ENCODE measurements at regions of chr9 and their contacts with region 1.

Region 1: DNA sequence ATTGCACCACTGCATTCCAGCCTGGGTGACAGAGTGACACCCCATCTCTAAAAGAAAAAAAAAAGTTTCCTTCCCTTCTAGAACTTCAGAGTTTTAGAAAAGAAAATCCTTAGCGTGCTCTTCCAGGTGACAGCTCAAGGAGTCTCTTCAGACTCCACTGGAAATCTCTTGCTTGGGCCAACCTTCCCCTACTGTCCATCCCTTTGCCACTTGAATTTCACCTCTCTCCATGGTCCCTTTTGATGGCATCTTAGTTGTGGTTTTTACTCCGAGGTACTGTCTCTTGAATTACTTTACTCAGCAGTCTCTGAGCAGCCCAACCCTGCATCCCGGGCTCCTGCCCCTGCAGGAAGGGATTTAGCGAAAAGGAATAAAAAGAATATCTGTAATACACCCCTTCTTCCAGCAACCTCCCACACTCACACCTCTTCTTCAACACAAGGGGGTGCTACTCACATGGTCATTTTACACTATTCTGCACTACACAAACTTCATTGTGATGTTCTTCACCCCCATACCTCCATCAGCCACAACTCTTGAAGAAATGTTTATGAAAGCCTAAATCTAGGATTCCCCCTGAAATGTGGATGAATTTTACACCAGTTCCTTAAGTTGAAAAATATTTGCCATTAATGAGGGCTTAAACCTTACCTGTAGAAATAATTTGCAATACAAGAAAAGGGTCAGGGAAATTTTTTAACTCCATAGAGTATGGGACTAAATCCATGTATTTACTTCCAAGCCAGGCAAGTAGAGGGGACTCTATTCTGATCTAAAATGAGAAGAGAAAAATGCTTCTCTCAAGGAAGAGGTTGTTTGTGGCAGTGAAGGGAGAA is 25.9 kb downstream of the TPD52L3 start:
- DNase-seq: peak; percentile 9
- H3K4me3 ChIP-seq: no peak overlapping the region
- H3K27me3 ChIP-seq: peaks cover 3% of the 10 kb centered on the region
- CTCF ChIP-seq: peak; percentile 76

Region 2: DNA sequence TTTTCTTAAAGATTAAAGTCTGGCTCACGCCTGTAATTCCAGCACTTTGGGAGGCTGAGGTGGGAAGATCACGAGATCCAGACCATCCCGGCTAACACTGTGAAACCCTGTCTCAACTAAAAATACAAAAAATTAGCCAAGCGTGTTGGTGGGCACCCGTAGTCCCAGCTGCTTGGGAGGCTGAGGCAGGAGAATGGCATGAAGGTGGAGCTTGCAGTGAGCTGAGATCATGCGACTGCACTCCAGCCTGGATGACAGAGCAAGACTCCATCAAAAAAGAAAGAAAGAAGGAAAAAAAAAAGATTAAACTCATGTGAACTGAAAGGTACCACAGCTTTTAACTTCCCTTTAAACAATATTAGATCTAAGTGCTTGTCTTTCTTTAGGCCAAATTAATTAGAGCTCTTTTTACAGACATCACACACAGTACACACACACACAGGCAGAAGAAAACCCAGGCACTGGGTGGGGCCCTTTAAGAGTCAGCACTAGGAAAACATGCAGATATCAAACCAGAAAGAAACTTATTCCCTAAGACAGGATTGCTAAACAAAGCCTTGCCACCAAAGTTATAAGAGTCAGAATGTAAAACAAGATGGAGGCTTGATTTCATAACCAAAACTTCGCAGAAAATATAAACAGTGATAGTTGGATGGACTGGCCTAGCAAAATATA is 29.6 kb after region 1 on chr9:
- CTCF ChIA-PET with region 1: no interaction called
- POLR2A ChIA-PET with region 1: no interaction called
- DNase-seq: no peak
- H3K4me3 ChIP-seq: no peak overlapping the region
- H3K27me3 ChIP-seq: no peaks in the 10 kb centered on the region
- CTCF ChIP-seq: no peak

Region 3: DNA sequence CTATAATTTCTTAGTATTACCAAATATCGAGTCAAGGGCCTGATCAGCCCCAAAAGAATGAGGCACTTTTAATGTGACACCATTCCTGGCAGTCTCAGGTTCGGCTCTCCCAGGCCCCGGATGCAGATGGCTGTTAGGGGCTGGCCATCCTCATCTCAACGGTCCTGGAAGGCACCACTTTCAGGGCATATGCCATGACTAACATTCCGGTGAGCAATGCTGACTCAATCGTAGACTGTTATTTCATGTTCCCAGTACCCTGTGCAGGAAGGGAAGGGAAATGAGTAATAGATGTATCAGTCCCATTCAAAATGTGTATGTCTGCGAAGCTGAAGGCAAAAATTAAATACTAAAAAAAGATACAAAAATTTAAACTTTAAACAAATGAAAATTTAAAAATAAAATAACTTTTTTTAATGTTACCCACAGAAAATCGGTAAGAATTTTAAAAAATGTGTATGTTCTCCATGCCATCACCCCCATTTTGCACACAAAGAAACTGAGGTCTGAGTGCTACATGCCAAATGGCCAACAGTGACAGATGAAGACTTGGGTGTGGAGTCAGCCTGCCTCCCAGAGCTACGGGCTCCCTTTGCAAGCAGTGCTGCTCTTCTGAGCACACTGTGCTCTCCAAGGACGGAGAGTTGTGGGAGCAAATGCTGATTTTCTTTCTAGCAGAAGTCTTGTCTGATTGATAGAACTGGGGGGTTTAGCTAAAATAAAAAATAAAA is 212.5 kb after region 1 on chr9:
- CTCF ChIA-PET with region 1: interaction called, 119 read pairs
- POLR2A ChIA-PET with region 1: no interaction called
- DNase-seq: peak; percentile 85
- H3K4me3 ChIP-seq: peak overlapping the region; percentile 29
- H3K27me3 ChIP-seq: no peaks in the 10 kb centered on the region
- CTCF ChIP-seq: no peak

Region 4: GRCh38 chr9:6667633-6668280 is 313.7 kb after region 1 on chr9:
- CTCF ChIA-PET with region 1: interaction called, 10 read pairs
- POLR2A ChIA-PET with region 1: no interaction called
- DNase-seq: no peak
- H3K4me3 ChIP-seq: no peak overlapping the region
- H3K27me3 ChIP-seq: no peaks in the 10 kb centered on the region
- CTCF ChIP-seq: peak; percentile 59

Measured in BJ (cell line).